A673 (cell line): ENCODE measurements at regions of chrX and their contacts with region 1.

Region 1: DNA sequence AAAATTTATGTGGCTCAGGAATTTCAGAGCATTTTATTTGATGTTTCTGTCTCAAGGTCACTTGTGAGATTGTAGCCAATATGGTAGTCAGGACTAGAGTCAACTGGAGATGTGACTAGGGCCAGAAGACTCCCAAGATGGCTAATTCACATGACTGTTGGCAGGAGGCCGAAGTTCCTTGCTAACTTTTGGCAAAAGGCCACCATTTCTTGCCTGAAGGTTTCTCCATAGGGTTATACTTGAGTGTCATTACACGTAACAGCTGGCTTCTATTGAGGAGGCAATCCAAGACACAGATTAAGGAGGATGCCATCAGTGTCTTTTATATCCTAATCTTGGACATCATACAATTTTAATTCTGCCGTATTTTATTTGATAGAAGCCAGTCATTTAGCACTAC is 162.3 kb upstream of the MAOA start:
- DNase-seq: peak; percentile 75
- H3K4me3 ChIP-seq: no peak overlapping the region
- H3K27ac ChIP-seq: no peak overlapping the region
- H3K4me1 ChIP-seq: no peaks in the 10 kb centered on the region
- H3K27me3 ChIP-seq: no peaks in the 10 kb centered on the region
- CTCF ChIP-seq: no peak

Region 2: DNA sequence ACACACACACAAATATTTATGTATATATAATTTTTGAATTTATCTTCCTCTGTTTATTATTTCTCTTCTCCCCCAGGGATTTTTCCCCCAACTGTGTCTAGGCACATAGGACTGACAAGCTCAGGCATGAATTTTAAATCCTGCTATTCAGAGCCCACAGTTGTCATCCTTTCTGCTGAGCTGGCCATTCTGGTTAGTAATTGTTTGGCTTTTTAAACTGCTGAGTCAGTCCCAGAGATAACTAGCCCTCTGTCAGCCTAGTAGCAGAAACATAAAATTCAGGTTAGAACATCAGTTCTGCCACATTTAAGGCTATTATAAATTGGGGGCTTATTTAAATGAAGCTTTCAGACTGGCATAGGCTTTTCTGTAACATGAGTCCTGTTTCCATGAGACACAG is 10.6 kb after region 1 on chrX:
- CTCF ChIA-PET with region 1: interaction called, 13 read pairs
- POLR2A ChIA-PET with region 1: no interaction called
- intact Hi-C with region 1: no loop called
- DNase-seq: peak; percentile 29
- H3K4me3 ChIP-seq: no peak overlapping the region
- H3K27ac ChIP-seq: no peak overlapping the region
- H3K4me1 ChIP-seq: peaks cover 13% of the 10 kb centered on the region
- H3K27me3 ChIP-seq: no peaks in the 10 kb centered on the region
- CTCF ChIP-seq: no peak